A549 (cell line): ENCODE measurements at regions of chr19 and their contacts with region 1.

Region 1: GRCh38 chr19:10388957-10389356 is 8.6 kb upstream of the TYK2 start:
- DNase-seq: peak; percentile 45 to 77
- ATAC-seq: peak; percentile 75 to 79
- H3K4me3 ChIP-seq: no peak overlapping the region
- H3K27ac ChIP-seq: no peak overlapping the region
- H3K4me1 ChIP-seq: no peaks in the 10 kb centered on the region
- CTCF ChIP-seq: peak; percentile 81
- EP300 ChIP-seq: no peak
- POLR2A ChIP-seq: no peak
- RAD21 ChIP-seq: peak; percentile 81 to 82

Region 2: GRCh38 chr19:10259162-10259905 is 129.6 kb before region 1 on chr19:
- CTCF ChIA-PET with region 1: interaction called, 77 read pairs
- POLR2A ChIA-PET with region 1: interaction called, 8 read pairs
- DNase-seq: peak in 1 of 2 experiments; percentile 86
- ATAC-seq: peak; percentile 67 to 82; a peak in 5 of 6 replicates
- H3K4me3 ChIP-seq: no peak overlapping the region
- H3K27ac ChIP-seq: 0 out of 6 replicates have a peak overlapping the region, but pooled peaks of 1 of the 2 experiments have one; percentile 21
- H3K4me1 ChIP-seq: peaks cover 15% of the 10 kb centered on the region; the same call in 2 of the 3 replicates
- CTCF ChIP-seq: peak; percentile 57
- EP300 ChIP-seq: no peak
- POLR2A ChIP-seq: no peak
- RAD21 ChIP-seq: peak; percentile 57 to 64

Region 3: DNA sequence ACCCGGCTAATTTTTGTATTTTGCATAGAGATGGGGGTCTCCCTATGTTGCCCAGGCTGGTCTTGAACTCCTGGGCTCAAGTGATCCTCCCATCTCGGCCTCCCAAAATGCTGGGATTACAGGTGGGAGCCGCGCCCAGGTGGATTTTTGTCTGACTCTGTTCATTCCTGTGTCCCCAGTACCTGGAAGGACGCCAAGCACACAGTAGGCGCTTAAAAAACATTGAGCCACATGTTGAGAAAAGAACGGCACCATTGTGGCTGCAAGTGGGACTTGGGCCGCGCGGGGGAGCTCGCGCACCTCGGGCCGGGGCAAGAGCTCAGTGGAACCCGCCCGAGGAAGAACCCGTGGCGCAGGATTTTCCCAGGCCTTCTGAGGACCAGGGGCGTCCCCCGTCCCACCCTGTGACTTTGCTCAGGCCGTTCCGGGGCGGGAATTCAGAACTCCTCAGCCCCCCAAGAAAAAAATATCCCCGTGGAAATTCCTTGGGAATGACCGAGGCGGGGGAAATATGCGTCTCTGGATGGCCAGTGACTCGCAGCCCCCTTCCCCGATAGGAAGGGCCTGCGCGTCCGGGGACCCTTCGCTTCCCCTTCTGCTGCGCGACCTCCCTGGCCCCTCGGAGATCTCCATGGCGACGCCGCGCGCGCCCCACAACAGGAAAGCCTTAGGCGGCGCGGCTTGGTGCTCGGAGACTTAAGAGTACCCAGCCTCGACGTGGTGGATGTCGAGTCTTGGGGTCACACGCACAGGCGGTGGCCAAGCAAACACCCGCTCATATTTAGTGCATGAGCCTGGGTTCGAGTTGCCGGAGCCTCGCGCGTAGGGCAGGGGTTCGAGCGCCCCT is 119.4 kb before region 1 on chr19:
- CTCF ChIA-PET with region 1: interaction called, 104 read pairs
- POLR2A ChIA-PET with region 1: interaction called, 10 read pairs
- DNase-seq: peak in 1 of 2 experiments; percentile 63
- ATAC-seq: peak; percentile 86 to 92
- H3K4me3 ChIP-seq: peak overlapping the region; percentile 17; the same call in 1 of the 3 replicates
- H3K27ac ChIP-seq: peak overlapping the region; percentile 6 to 78; a peak in 4 of 6 replicates
- H3K4me1 ChIP-seq: peaks cover 16% of the 10 kb centered on the region
- CTCF ChIP-seq: peak; percentile 79
- EP300 ChIP-seq: no peak
- POLR2A ChIP-seq: no peak
- RAD21 ChIP-seq: peak; percentile 89 to 90

Region 4: DNA sequence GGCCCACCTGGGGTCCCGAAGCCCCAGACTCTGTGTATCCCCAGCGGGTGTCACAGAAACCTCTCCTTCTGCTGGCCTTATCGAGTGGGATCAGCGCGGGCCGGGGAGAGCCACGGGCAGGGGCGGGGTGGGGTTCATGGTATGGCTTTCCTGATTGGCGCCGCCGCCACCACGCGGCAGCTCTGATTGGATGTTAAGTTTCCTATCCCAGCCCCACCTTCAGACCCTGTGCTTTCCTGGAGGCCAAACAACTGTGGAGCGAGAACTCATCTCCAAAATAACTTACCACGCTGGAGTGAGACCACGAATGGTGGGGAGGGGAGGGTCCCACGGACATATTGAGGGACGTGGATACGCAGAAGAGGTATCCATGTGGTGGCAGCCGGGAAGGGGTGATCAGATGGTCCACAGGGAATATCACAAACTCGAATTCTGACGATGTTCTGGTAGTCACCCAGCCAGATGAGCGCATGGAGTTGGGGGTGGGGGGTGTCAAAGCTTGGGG is 100.2 kb before region 1 on chr19:
- CTCF ChIA-PET with region 1: interaction called, 10 read pairs
- POLR2A ChIA-PET with region 1: no interaction called
- DNase-seq: peak; percentile 75 to 85
- ATAC-seq: peak; percentile 62 to 76; a peak in 5 of 6 replicates
- H3K4me3 ChIP-seq: peak overlapping the region; percentile 52
- H3K27ac ChIP-seq: peak overlapping the region; percentile 48 to 81
- H3K4me1 ChIP-seq: peaks cover 16% of the 10 kb centered on the region
- CTCF ChIP-seq: no peak
- EP300 ChIP-seq: no peak
- POLR2A ChIP-seq: no peak
- RAD21 ChIP-seq: no peak

Region 5: DNA sequence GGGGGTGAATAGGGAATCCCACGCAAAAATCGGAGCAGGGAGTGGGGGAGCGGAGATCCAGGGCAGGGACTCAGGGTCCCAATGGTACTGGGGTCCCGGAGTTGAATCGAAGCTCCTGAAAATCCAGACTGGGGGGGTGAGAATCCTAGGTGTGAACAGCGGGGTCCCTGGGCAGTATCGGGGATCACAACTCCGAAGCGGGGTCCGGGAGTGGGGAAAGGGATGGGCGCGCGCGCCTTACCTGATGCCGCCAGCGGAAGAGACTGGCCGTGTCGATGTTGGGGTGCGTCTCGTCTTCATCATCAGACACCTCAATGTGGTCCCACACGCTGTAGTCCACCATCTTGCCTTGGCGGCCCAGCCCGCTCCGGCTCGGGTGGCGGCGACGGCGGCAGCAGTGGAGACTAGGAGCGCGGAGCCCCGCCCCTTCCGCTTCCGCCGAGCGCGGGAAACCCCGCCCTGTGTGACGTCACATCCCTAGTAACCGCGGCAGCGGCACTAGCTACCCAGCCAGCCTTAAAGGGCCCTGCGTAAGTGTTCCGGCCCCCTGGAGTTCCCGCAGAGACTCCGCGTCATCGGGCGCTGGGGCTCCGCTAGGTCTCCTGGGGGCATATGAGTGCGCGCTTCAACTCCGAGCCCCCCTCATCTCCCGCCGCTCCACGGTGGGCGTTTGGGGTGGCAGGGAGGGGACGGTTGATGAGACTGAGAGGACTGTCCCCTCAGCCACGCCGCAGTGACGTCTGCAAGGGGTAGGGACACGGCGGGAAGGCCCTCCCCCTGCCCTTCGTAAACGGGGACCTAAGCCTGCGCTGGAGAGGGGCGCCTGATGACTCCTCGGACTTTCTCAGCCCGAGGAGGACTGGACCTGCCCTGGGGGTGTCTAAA is 14.4 kb after region 1 on chr19 and contains the start of gene CDC37:
- CTCF ChIA-PET with region 1: interaction called, 37 read pairs
- POLR2A ChIA-PET with region 1: no interaction called
- DNase-seq: peak; percentile 93 to 95
- ATAC-seq: peak; percentile 87 to 89
- H3K4me3 ChIP-seq: peak within 1 kb of the TSS; percentile 94
- H3K27ac ChIP-seq: peak within 1 kb of the TSS; percentile 82 to 94
- H3K4me1 ChIP-seq: peaks cover 23% of the 10 kb centered on the region
- CTCF ChIP-seq: no peak
- EP300 ChIP-seq: no peak
- POLR2A ChIP-seq: peak; percentile 89
- RAD21 ChIP-seq: no peak
- polyA plus RNA-seq, gene CDC37: 125 and 152 TPM in 2 replicates

Region 6: GRCh38 chr19:10454267-10454666 is 65.3 kb after region 1 on chr19:
- CTCF ChIA-PET with region 1: no interaction called
- POLR2A ChIA-PET with region 1: no interaction called
- DNase-seq: peak in 1 of 2 experiments; percentile 36
- ATAC-seq: peak in 1 of 2 experiments; percentile 47; a peak in 3 of 6 replicates
- H3K4me3 ChIP-seq: no peak overlapping the region
- H3K27ac ChIP-seq: no peak overlapping the region
- H3K4me1 ChIP-seq: no peaks in the 10 kb centered on the region
- CTCF ChIP-seq: no peak
- EP300 ChIP-seq: no peak
- POLR2A ChIP-seq: no peak
- RAD21 ChIP-seq: no peak